AG04450 (cell line): ENCODE measurements at regions of chr19 and their contacts with region 1.

Region 1: GRCh38 chr19:56333505-56333904 is 18.9 kb upstream of the ZSCAN5A start:
- DNase-seq: peak; percentile 18
- H3K4me3 ChIP-seq: no peak overlapping the region
- H3K27ac ChIP-seq: no peak overlapping the region
- H3K27me3 ChIP-seq: no peaks in the 10 kb centered on the region
- CTCF ChIP-seq: peak; percentile 83

Region 2: GRCh38 chr19:56080669-56081401 is 252.7 kb before region 1 on chr19:
- CTCF ChIA-PET with region 1: interaction called, 151 read pairs
- POLR2A ChIA-PET with region 1: no interaction called
- DNase-seq: peak; percentile 37
- H3K4me3 ChIP-seq: peak overlapping the region; percentile 49
- H3K27ac ChIP-seq: no peak overlapping the region
- H3K27me3 ChIP-seq: no peaks in the 10 kb centered on the region
- CTCF ChIP-seq: peak; percentile 68

Region 3: DNA sequence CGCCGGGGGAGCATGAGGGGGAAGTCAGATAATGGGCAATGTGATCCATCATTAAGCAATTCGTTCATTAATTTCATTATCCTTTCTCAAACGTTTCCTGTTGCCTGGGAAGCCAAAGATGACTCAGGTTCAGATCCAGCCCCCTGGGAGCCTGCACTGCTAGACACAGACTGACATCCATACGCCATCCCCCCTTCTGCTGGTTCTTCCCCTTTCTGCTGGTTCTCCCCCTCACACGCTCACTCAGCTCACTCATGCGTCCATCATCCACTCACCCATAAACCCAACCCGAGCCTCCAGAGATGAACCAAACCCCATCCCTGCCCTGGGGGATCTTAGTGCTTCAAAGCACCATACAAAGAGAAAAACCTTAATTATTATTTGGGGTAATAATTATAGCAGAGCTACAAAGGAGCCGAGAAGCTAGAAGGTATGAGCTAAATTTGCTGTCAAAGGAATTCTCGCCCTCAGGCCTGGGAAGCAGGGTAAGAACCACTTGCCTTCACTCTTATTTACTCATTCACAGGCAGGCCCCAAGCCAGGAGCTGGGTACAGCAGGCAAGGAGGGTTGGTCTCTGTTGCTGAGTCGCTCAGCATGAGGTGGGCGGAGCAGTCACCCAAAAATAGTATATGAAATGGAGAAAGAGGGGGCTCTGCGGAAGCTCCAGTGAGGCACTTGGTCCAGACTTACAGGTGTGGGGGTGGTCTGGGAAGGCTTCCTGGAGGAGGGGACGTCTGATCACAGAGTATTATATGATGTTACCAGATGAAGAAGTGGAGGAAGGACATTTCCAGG is 199.4 kb before region 1 on chr19:
- CTCF ChIA-PET with region 1: no interaction called
- POLR2A ChIA-PET with region 1: no interaction called
- DNase-seq: no peak
- H3K4me3 ChIP-seq: no peak overlapping the region
- H3K27ac ChIP-seq: peak overlapping the region; percentile 31
- H3K27me3 ChIP-seq: no peaks in the 10 kb centered on the region
- CTCF ChIP-seq: no peak

Region 4: DNA sequence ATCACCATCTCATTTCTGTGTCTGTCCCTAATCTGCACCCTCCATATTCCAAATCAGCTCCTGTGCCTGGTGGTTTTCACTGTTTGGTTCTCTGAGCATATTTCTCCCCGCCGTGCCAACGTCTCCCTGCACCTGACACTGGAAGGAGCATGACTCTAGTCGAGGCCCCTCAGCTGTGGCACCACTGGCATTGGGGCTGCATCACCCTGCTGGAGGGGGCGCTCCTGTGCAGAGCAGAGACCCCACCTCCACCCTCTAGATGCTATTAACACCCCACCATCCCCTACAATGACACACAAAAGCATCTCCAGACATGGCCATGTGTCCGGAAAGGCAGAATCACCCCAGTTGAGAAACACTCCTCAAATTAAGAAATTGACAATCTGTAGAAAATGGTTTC is 110.6 kb before region 1 on chr19:
- CTCF ChIA-PET with region 1: interaction called, 12 read pairs
- POLR2A ChIA-PET with region 1: no interaction called
- DNase-seq: no peak
- H3K4me3 ChIP-seq: no peak overlapping the region
- H3K27ac ChIP-seq: no peak overlapping the region
- H3K27me3 ChIP-seq: no peaks in the 10 kb centered on the region
- CTCF ChIP-seq: no peak

Region 5: GRCh38 chr19:56261145-56261544 is 72.4 kb before region 1 on chr19:
- CTCF ChIA-PET with region 1: interaction called, 396 read pairs
- POLR2A ChIA-PET with region 1: no interaction called
- DNase-seq: no peak
- H3K4me3 ChIP-seq: no peak overlapping the region
- H3K27ac ChIP-seq: no peak overlapping the region
- H3K27me3 ChIP-seq: no peaks in the 10 kb centered on the region
- CTCF ChIP-seq: no peak

Region 6: GRCh38 chr19:56314562-56315077 is 18.9 kb before region 1 on chr19 and contains the start of gene ZSCAN5A:
- CTCF ChIA-PET with region 1: interaction called, 22 read pairs
- POLR2A ChIA-PET with region 1: interaction called, 7 read pairs
- DNase-seq: peak; percentile 87
- H3K4me3 ChIP-seq: peak within 1 kb of the TSS; percentile 95
- H3K27ac ChIP-seq: peak within 1 kb of the TSS; percentile 97
- H3K27me3 ChIP-seq: no peaks in the 10 kb centered on the region
- CTCF ChIP-seq: no peak
- polyA plus RNA-seq, gene ZSCAN5A: 3.7 and 5.8 TPM in 2 replicates